ENCODE measurements at regions of chr9 and their contacts with region 1.

Region 1: GRCh38 chr9:33374634-33375213 is 27.6 kb downstream of the AQP7 start:
- DNase-seq: no peak
- ATAC-seq: peak; percentile 80

Region 2: DNA sequence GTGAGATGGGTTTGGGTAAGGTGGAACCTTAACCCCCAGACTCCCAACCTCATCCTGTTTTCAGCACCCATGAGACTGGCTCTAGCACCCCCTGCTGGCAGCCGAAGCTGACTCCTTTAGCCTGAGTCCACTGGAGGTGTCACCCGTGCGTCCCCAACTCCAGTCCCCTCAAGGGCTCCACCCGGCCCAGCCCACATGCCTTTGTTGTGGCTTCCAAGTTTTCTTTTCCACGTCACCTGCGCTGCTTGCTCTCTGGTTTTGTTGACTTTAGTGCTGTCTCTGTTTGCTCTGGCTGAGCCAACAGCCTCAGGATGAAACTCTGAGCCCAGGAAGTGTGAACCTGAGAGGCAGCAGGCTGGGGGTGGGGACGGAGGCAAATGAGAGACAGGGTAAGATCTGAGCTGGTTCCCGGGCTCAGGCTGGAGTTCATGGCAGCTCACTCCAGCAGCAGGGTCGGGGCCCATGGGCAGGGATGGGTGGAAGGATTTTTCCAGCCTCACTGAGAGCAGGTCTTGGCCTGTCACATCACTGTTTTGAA is 40.8 kb after region 1 on chr9:
- intact Hi-C with region 1: loop called (anchors 1 kb)
- DNase-seq: peak; percentile 84
- ATAC-seq: peak; percentile 70

Region 3: GRCh38 chr9:33452828-33453271 is 78.1 kb after region 1 on chr9:
- intact Hi-C with region 1: loop called (anchors 5 kb)
- DNase-seq: no peak
- ATAC-seq: no peak

Region 4: GRCh38 chr9:33466565-33467495 is 92.1 kb after region 1 on chr9:
- intact Hi-C with region 1: loop called (anchors 1 kb)
- DNase-seq: peak; percentile 89
- ATAC-seq: peak; percentile 55

Region 5: DNA sequence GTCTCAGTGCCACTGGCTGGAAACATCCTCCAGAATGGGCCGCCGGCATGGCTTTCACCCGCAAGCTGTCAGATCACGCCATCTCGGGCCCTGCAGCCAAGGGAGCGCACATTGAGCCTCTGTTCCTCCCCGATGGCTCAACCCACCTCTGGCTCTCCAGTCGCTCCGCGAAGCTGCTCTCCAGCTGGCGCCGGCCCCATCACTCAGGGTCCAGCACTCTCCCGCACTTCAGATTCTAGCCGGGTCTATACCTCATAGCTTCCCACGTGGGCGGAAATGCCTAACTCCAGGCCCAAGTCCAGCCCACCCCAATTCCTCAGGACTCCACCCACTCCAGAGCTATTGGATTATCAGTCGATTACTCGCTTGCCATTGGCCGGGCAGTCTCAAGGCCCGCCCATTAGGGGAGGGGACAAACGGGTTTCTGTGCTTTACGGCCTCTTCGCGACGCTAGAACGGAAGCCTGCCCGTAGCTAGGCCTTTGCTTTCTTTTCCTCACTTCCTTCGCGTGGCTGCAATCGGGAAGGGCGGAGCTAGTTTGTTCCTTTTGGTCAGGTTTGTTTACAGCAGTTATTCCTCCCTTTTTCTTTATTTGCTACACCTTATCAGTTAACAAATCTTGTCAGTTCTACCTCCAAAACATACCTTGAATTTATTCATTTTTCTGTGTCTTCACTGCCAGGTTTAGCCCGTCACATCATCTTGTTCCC is 99.1 kb after region 1 on chr9 and contains the start of gene NOL6:
- intact Hi-C with region 1: loop called (anchors 1 kb)
- DNase-seq: peak; percentile 96
- ATAC-seq: peak; percentile 100
- total RNA-seq, gene NOL6: 13.0 TPM

Region 6: GRCh38 chr9:33510264-33511183 is 135.8 kb after region 1 on chr9:
- intact Hi-C with region 1: loop called (anchors 10 kb)
- DNase-seq: peak; percentile 85
- ATAC-seq: peak; percentile 95

Region 7: DNA sequence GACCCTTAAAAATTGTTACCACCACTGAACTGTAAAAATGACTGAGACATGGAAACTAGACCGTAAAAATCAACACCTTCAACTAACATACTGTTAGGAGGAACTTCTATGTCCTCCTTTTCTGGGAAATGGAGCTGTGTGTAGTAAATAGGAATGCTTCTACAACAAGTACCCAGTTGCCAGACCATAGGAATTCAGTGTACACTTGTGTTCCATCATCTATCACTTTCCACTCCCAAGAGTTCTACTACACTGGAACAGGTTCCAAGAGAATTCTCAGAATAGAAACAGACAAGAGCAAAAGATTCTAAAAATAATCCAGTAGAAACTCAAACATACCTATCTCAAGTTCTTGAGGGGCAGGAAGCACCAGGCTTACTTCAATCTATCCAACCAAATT is 650.3 kb after region 1 on chr9:
- intact Hi-C with region 1: no loop called
- DNase-seq: no peak
- ATAC-seq: peak; percentile 87

Measured in Right ventricle myocardium inferior (tissue), 1 donor.